ENCODE measurements at regions of chr4 and their contacts with region 1.

Region 1: DNA sequence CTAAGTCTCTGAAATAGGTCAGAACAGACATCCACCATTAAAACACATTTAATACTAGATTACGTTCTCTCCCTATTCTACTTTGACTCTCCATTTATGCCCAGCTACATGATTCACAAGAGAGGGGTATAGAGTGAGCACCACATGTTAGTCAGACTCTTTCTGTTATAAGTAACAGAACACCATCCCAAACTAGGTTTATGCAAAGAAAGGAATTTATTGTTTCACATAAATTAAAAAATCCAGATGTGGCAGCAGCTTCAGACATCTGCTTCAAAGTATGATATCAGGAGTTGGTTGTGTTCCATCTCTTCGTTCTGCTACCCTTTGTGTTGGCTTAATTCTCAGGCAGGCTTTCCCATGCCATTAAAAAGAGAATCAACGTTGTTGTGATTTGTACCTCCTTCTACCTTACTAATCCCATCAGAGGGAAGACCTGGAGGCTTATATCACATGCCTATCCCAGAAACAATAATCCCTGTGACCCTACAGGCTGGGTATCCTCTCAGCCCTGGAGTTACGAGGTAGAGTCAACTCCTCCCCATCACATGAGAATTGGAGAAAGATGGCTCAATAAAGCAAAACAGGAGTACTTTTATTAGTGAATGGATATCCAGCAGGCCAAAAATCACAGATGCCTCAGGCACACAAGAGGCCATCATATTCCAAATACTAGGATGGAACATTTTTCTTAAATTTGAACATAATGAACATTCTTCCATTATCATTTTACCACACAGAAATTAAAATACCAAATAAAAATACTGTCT is 163.2 kb downstream of the SLC7A11 start:
- DNase-seq: no peak
- CTCF ChIP-seq: no peak

Region 2: DNA sequence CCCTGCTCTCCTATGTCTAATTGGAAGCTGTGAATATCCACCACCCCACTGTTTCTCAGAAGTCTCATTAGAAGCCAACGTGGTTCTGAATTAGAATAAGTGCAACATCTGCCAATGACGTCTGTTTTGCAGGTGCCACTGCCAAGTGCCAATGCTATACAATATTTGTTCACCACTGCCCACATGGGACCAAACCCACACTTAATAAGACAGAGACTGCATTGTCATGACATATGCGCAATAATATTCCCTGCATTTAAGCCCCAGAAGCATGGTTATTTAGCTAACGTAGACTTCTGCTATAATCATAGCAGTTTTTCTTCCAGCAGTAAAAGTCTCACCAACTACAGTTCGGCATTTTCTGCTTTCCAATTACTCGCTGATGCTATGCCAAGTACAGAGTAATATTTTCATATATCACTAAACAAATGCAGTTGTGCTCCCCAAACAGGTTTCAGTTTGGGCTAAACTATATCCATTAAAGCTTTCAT is 284.1 kb before region 1 on chr4:
- CTCF ChIA-PET with region 1: no interaction called
- POLR2A ChIA-PET with region 1: no interaction called
- DNase-seq: no peak
- CTCF ChIP-seq: no peak

Region 3: GRCh38 chr4:137892134-137892533 is 186.8 kb before region 1 on chr4:
- CTCF ChIA-PET with region 1: no interaction called
- POLR2A ChIA-PET with region 1: no interaction called
- DNase-seq: no peak
- CTCF ChIP-seq: no peak

Region 4: GRCh38 chr4:138062929-138063328 is 16.0 kb before region 1 on chr4:
- CTCF ChIA-PET with region 1: interaction called, 10 read pairs
- POLR2A ChIA-PET with region 1: no interaction called
- DNase-seq: no peak
- CTCF ChIP-seq: no peak

Measured in GM10248 (cell line).